ENCODE measurements at regions of chr1 and their contacts with region 1.

Region 1: GRCh38 chr1:6794164-6794563 is 8.9 kb downstream of the CAMTA1 start:
- DNase-seq: no peak
- H3K4me3 ChIP-seq: no peak overlapping the region
- H3K27ac ChIP-seq: no peak overlapping the region
- H3K4me1 ChIP-seq: peaks cover 30 to 67% (median 61%) of the 10 kb centered on the region in 4 donors
- H3K27me3 ChIP-seq: no peaks in the 10 kb centered on the region
- CTCF ChIP-seq: peak; percentile 44 to 55 (median 47)
- EP300 ChIP-seq: no peak
- POLR2A ChIP-seq: no peak

Region 2: GRCh38 chr1:6889875-6890480 is 95.8 kb after region 1 on chr1:
- intact Hi-C with region 1: loop called (anchors 2 kb)
- DNase-seq: no peak
- H3K4me3 ChIP-seq: no peak overlapping the region
- H3K27ac ChIP-seq: no peak overlapping the region
- H3K4me1 ChIP-seq: peaks cover 5 to 13% (median 9%) of the 10 kb centered on the region in 4 donors
- H3K27me3 ChIP-seq: no peaks in the 10 kb centered on the region
- CTCF ChIP-seq: peak; percentile 78 to 83 (median 79)
- EP300 ChIP-seq: no peak
- POLR2A ChIP-seq: no peak

Region 3: DNA sequence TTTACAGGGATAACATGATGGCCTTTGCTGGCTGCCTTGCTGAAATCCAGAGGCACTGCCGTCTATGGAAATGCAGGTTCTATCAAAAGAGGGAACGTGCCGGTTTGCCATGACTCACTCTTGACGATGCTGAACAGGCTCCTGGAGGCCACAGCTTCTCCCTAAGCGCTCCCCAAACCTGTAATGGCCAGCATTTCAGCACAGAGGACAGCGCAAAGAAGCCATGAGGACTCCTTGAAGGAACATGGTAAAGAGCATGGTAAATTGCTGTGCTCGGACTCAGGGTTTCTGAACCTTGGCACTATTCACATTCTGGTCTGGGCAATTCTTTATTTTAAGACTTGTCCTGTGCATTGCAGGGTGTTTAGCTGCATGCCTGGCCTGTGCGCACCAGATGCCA is 208.6 kb after region 1 on chr1:
- intact Hi-C with region 1: no loop called
- DNase-seq: no peak
- H3K4me3 ChIP-seq: no peak overlapping the region
- H3K27ac ChIP-seq: no peak overlapping the region
- H3K4me1 ChIP-seq: no peaks in the 10 kb centered on the region
- H3K27me3 ChIP-seq: peaks cover 0 to 36% (median 0%) of the 10 kb centered on the region in 4 donors
- CTCF ChIP-seq: no peak
- EP300 ChIP-seq: no peak
- POLR2A ChIP-seq: no peak

Region 4: DNA sequence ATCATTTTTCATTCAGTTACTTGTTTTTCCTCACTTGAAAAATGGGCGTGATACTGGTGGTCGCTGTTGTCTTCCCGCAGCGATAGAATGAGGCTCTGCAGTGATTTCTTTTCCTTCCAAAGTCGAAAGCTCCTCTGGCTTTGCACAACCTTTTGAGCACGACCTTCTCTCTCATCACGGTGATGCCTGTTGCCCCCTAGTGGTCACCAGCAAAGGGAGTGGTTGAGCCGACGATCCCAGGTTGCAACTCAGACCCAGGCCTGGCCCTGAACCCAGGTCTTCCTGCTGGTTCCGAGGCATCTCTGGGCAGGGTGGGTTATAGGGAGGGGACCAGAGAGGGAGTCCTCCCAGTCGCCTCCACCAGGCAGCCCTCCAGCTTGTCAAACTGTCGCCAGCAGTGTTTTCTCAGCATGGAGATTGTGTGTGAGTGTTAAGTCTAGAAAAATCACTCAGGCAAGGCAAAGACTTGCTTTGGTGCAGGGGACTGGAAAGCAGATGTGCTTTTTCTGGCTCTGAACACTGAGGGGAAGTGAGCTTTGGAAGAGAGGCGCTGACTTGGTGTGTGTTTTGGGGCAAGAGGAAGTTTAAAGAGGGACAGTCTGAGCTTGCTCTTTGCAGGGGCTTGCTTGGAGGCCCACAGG is 276.3 kb after region 1 on chr1:
- intact Hi-C with region 1: loop called (anchors 2 kb)
- DNase-seq: no peak
- H3K4me3 ChIP-seq: peak overlapping the region; percentile 43 to 53 (median 46)
- H3K27ac ChIP-seq: no peak overlapping the region
- H3K4me1 ChIP-seq: peaks cover 5 to 13% (median 9%) of the 10 kb centered on the region in 4 donors
- H3K27me3 ChIP-seq: peaks cover 0 to 14% (median 0%) of the 10 kb centered on the region in 4 donors
- CTCF ChIP-seq: peak; percentile 66 to 84 (median 82)
- EP300 ChIP-seq: no peak
- POLR2A ChIP-seq: no peak

Measured in esophagus muscularis mucosa (tissue), 4 donors.